PC-3 (cell line): ENCODE measurements at regions of chr13 and their contacts with region 1.

Region 1: GRCh38 chr13:68304286-68304893 is 1074.3 kb upstream of the PCDH9 start:
- DNase-seq: peak; percentile 61
- ATAC-seq: peak; percentile 54; the same call in 1 of the 2 replicates
- H3K4me3 ChIP-seq: no peak overlapping the region
- H3K27ac ChIP-seq: no peak overlapping the region
- H3K4me1 ChIP-seq: no peaks in the 10 kb centered on the region
- H3K27me3 ChIP-seq: no peaks in the 10 kb centered on the region
- CTCF ChIP-seq: peak; percentile 72

Region 2: GRCh38 chr13:68007578-68007977 is 296.8 kb before region 1 on chr13:
- CTCF ChIA-PET with region 1: no interaction called
- POLR2A ChIA-PET with region 1: no interaction called
- intact Hi-C with region 1: no loop called
- DNase-seq: no peak
- ATAC-seq: no peak
- H3K4me3 ChIP-seq: no peak overlapping the region
- H3K27ac ChIP-seq: no peak overlapping the region
- H3K4me1 ChIP-seq: no peaks in the 10 kb centered on the region
- H3K27me3 ChIP-seq: no peaks in the 10 kb centered on the region
- CTCF ChIP-seq: no peak

Region 3: DNA sequence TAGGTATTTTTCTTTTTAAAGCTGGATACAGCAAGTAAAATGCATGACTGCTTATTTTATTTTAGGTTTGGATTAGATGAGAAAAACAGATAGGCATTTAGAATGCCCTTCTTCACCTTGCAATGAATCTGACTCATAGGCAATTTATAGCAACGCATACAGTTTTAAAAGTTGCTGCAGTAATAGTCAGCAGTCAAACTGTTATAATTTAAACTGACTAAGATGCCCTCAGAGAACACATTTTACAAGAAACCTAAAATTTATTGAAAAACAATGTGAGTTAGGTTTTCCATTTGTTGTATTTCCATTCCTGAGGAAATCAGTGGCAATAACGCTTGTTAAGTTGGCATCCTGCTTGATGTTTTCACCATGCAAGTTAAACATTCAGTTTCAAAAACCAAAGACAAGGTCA is 53.9 kb after region 1 on chr13:
- CTCF ChIA-PET with region 1: no interaction called
- POLR2A ChIA-PET with region 1: no interaction called
- intact Hi-C with region 1: loop called (anchors 5 kb)
- DNase-seq: peak; percentile 61
- ATAC-seq: peak; percentile 88
- H3K4me3 ChIP-seq: peak overlapping the region; percentile 23; the same call in 1 of the 2 replicates
- H3K27ac ChIP-seq: peak overlapping the region; percentile 82
- H3K4me1 ChIP-seq: peaks cover 16% of the 10 kb centered on the region
- H3K27me3 ChIP-seq: no peaks in the 10 kb centered on the region
- CTCF ChIP-seq: no peak

Region 4: GRCh38 chr13:68509734-68510621 is 205.6 kb after region 1 on chr13:
- CTCF ChIA-PET with region 1: no interaction called
- POLR2A ChIA-PET with region 1: no interaction called
- intact Hi-C with region 1: loop called (anchors 10 kb)
- DNase-seq: peak; percentile 43
- ATAC-seq: peak; percentile 68
- H3K4me3 ChIP-seq: no peak overlapping the region
- H3K27ac ChIP-seq: no peak overlapping the region
- H3K4me1 ChIP-seq: no peaks in the 10 kb centered on the region
- H3K27me3 ChIP-seq: no peaks in the 10 kb centered on the region
- CTCF ChIP-seq: no peak

Region 5: DNA sequence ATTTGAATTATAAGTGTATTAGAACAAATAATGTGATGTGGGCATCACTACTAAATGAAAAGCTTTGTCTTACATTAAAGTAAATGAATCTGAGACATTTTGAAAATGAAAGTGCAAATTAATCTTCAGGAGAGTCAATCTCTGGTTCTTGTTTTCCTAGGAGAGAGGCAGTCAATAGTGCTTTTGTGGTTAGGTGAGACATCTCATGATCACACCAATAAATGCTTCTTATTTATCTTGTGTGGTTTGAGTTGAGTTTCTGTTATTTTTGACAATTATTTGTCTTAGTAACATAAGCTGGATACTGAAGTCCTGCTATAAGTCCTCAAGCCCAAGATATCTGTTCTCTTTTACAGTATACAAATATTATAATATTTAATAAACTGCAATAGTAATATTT is 303.8 kb after region 1 on chr13:
- CTCF ChIA-PET with region 1: no interaction called
- POLR2A ChIA-PET with region 1: no interaction called
- intact Hi-C with region 1: loop called (anchors 5 kb)
- DNase-seq: peak; percentile 48
- ATAC-seq: peak; percentile 96
- H3K4me3 ChIP-seq: no peak overlapping the region
- H3K27ac ChIP-seq: no peak overlapping the region
- H3K4me1 ChIP-seq: no peaks in the 10 kb centered on the region
- H3K27me3 ChIP-seq: no peaks in the 10 kb centered on the region
- CTCF ChIP-seq: no peak

Region 6: DNA sequence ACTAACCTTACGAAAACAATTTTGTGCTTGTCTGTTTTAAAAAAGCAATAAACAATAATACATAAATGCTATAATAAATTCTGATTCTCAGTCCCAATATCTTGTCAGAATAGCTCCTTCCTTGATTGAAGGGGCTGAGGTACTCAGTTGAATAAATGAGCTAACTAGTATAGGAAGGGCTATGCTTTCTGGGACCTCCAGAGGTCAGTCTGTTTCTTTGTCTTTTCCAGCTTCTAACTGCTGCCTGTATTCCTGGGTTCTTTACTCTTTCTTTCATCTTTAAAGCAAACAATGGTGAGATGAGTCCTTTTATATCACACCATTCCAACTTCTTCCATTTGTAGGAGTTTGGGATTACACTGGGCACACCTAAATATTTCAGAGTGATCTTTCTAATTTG is 506.3 kb after region 1 on chr13:
- CTCF ChIA-PET with region 1: no interaction called
- POLR2A ChIA-PET with region 1: no interaction called
- intact Hi-C with region 1: loop called (anchors 1 kb)
- DNase-seq: peak; percentile 6
- ATAC-seq: peak; percentile 86
- H3K4me3 ChIP-seq: no peak overlapping the region
- H3K27ac ChIP-seq: no peak overlapping the region
- H3K4me1 ChIP-seq: peaks cover 7% of the 10 kb centered on the region; the same call in 1 of the 2 replicates
- H3K27me3 ChIP-seq: no peaks in the 10 kb centered on the region
- CTCF ChIP-seq: peak; percentile 48; the same call in 1 of the 2 replicates

Region 7: DNA sequence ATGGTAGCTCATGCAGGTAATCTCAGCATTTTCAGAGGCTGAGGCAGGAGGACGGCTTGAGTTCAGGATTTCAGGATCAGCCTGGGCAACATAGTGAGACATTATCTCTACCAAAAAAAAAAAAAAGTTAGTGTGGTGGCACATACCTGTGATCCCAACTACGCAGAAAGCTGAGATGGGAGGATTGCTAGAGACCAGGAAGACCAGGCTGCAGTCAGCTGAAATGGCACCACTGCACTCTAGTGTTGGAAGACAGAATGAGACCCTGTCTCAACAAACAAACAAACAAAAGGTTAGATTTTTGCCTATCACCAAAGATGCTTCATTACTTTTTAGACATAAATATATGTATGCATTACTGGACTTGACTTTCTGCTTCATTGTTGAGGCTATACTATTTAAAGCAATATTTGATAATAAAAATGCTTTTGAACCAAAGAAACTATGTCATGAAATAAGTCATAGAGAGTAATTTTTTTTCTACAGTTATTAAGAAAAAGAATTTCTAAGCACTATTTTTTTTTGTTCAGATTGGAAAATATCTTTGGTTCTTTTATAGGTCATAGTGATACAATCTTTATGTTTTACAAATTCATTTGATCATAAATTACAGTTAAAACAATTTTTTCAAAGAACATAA is 623.1 kb after region 1 on chr13:
- CTCF ChIA-PET with region 1: no interaction called
- POLR2A ChIA-PET with region 1: no interaction called
- intact Hi-C with region 1: loop called (anchors 1 kb)
- DNase-seq: peak; percentile 60
- ATAC-seq: peak; percentile 84
- H3K4me3 ChIP-seq: no peak overlapping the region
- H3K27ac ChIP-seq: no peak overlapping the region
- H3K4me1 ChIP-seq: no peaks in the 10 kb centered on the region
- H3K27me3 ChIP-seq: no peaks in the 10 kb centered on the region
- CTCF ChIP-seq: peak; percentile 65

Region 8: GRCh38 chr13:69324090-69324886 is 1019.9 kb after region 1 on chr13:
- CTCF ChIA-PET with region 1: no interaction called
- POLR2A ChIA-PET with region 1: no interaction called
- intact Hi-C with region 1: loop called (anchors 2 kb)
- DNase-seq: peak; percentile 42
- ATAC-seq: peak; percentile 31; the same call in 1 of the 2 replicates
- H3K4me3 ChIP-seq: no peak overlapping the region
- H3K27ac ChIP-seq: no peak overlapping the region
- H3K4me1 ChIP-seq: no peaks in the 10 kb centered on the region
- H3K27me3 ChIP-seq: no peaks in the 10 kb centered on the region
- CTCF ChIP-seq: peak; percentile 51